ENCODE measurements at regions of chr21 and their contacts with region 1.

Region 1: DNA sequence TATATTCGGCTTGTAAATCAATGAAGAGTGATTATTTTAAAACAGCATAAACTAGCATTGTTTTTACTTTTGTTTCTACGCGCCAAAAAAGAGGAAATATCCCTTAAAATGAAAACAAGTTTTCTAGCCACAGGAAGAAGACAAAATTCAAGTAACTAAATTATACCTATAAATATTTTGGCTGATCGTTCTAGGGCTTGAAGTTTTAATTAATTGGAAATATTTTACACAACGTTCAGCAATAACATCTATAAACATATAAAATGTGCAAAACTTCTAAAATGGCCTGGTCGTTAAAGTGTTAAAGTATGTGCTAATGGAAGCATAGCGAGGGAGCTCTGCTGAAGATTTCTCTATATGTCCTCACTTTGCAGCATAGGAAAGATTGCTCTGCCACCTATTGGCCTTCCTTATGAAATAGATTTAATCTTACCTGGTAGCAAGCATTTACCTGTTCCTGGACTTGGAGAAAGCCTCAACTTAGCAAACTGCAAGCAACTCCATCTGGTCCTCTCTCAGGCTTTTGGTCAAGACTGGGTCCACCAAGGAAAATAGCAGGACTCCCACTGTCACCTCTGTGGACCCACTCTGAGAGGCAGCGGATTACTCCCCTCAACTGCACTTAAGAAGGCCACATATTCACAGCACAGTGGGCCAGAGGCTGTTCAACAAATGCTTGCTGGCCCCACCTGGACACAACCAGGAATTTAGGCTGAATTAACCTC is 351.3 kb upstream of the RUNX1 start:
- DNase-seq: peak; percentile 90
- ATAC-seq: peak; percentile 82
- H3K4me3 ChIP-seq: no peak overlapping the region
- H3K27ac ChIP-seq: peak overlapping the region; percentile 1; the same call in 1 of the 2 replicates
- H3K4me1 ChIP-seq: peaks cover 41% of the 10 kb centered on the region
- H3K27me3 ChIP-seq: no peaks in the 10 kb centered on the region
- CTCF ChIP-seq: peak; percentile 87

Region 2: GRCh38 chr21:34745557-34746255 is 654.7 kb before region 1 on chr21:
- CTCF ChIA-PET with region 1: interaction called, 11 read pairs
- POLR2A ChIA-PET with region 1: no interaction called
- intact Hi-C with region 1: loop called (anchors 5 kb)
- DNase-seq: peak; percentile 93
- ATAC-seq: peak; percentile 68
- H3K4me3 ChIP-seq: no peak overlapping the region
- H3K27ac ChIP-seq: no peak overlapping the region
- H3K4me1 ChIP-seq: peaks cover 31% of the 10 kb centered on the region
- H3K27me3 ChIP-seq: no peaks in the 10 kb centered on the region
- CTCF ChIP-seq: peak; percentile 97

Region 3: GRCh38 chr21:35150562-35151226 is 249.7 kb before region 1 on chr21:
- CTCF ChIA-PET with region 1: no interaction called
- POLR2A ChIA-PET with region 1: no interaction called
- intact Hi-C with region 1: loop called (anchors 5 kb)
- DNase-seq: peak; percentile 63
- ATAC-seq: peak; percentile 77
- H3K4me3 ChIP-seq: no peak overlapping the region
- H3K27ac ChIP-seq: peak overlapping the region; percentile 72
- H3K4me1 ChIP-seq: peaks cover 62% of the 10 kb centered on the region
- H3K27me3 ChIP-seq: no peaks in the 10 kb centered on the region
- CTCF ChIP-seq: no peak

Region 4: DNA sequence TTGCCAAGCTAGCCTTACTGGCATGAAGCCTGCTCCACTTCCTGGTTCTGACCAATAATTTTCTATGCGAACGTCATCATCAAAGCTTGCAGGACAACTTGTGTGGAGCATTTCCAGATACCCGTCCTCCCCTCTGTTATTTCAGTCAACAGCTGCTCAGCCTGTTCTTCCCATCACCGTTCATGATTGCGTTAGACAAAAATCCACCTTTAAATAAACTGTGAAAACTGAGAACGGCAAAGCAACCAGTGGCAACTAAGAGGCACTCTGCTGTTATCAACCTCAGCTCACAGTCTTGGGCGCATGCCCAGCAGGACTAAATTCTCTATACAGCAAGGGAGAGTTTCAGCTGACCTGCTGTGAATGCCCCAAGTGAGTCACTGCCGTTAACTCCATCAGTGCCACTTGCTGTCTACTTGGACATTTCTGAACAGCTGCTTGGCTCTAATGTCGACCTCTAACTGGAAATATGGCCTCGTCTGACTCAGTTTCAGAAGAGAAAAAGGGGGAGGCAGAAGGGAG is 143.9 kb before region 1 on chr21:
- CTCF ChIA-PET with region 1: interaction called, 4 read pairs
- POLR2A ChIA-PET with region 1: no interaction called
- intact Hi-C with region 1: loop called (anchors 1 kb)
- DNase-seq: peak; percentile 98
- ATAC-seq: peak; percentile 87
- H3K4me3 ChIP-seq: peak overlapping the region; percentile 58
- H3K27ac ChIP-seq: peak overlapping the region; percentile 92
- H3K4me1 ChIP-seq: peaks cover 58% of the 10 kb centered on the region
- H3K27me3 ChIP-seq: no peaks in the 10 kb centered on the region
- CTCF ChIP-seq: no peak

Region 5: DNA sequence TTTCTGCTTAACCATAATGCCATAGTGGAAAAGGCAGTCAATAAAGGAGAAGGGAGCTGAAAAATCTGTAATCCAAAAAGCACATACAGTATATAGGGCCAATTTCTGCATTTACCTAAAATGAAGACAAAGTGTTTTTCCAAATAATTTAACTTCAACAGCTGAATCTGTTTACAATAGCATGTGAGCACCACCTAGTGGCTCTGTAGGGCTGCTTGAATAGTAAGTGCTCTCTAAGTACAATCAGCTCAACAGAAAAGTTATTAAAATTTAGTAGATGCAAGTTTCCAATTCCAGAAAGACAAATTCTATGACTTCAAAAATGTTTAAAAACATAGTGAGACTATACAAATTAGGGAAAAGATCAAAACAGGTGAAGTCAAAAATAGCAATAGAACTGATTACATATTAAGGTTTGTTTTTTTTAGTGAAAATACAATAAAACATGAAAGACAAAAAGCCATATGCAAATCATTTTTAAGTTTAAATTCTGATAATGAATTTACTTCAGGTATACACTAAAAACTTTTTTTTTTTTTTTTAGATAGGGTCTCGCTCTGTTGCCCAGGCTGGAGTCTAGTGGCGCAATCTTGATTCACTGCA is 439.9 kb after region 1 on chr21:
- CTCF ChIA-PET with region 1: interaction called, 5 read pairs
- POLR2A ChIA-PET with region 1: no interaction called
- intact Hi-C with region 1: loop called (anchors 5 kb)
- DNase-seq: peak; percentile 82
- ATAC-seq: peak; percentile 81
- H3K4me3 ChIP-seq: no peak overlapping the region
- H3K27ac ChIP-seq: no peak overlapping the region
- H3K4me1 ChIP-seq: no peaks in the 10 kb centered on the region
- H3K27me3 ChIP-seq: no peaks in the 10 kb centered on the region
- CTCF ChIP-seq: peak; percentile 98

Region 6: DNA sequence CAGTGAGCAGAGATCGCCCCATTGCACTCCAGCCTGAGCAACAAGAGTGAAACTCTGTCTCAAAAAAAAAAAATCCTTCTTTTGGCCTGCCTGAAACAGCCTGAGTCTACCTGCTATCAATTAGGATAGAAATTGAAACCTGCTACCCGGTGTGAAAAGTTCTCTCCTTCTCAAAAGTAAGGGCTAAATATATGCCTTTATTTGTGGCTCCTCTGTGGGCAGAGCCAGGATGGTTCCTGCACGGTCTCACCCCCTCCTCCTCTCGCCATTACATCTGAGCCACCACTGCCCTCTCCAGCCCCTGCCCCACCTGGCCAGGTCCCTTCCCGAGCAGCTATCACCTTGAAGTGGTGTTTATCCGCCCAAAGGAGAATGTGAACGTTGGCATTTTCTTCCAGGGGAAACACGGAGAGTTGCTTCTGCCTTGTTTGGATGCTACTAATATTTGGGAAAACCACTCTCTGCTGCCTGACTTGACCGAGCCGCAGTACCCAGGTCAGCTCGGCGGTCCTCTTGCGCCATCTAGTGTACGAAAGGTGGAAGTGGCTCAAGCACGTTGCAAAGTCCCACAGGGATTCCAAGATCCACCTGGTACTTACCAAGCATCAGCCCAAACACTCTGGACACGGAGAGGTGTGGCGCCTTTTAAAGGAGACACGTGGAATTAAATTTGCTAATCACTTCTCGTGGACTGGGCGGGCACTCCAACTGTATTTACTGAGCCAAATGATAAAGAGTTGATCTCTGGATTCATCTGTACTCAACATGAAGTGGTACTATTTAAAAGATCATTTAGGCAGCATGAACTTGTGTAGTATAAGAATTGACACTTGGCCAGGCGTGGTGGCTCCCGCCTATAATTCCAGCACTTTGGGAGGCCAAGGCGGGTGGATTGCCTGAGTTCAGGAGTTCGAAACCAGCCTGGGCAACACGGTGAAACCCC is 628.0 kb after region 1 on chr21:
- CTCF ChIA-PET with region 1: no interaction called
- POLR2A ChIA-PET with region 1: no interaction called
- intact Hi-C with region 1: loop called (anchors 1 kb)
- DNase-seq: peak; percentile 89
- ATAC-seq: peak; percentile 97
- H3K4me3 ChIP-seq: no peak overlapping the region
- H3K27ac ChIP-seq: no peak overlapping the region
- H3K4me1 ChIP-seq: no peaks in the 10 kb centered on the region
- H3K27me3 ChIP-seq: no peaks in the 10 kb centered on the region
- CTCF ChIP-seq: peak; percentile 97

Measured in PC-3 (cell line).